Left ventricle myocardium inferior (tissue), 1 donor: ENCODE measurements at regions of chr7 and their contacts with region 1.

Region 1: DNA sequence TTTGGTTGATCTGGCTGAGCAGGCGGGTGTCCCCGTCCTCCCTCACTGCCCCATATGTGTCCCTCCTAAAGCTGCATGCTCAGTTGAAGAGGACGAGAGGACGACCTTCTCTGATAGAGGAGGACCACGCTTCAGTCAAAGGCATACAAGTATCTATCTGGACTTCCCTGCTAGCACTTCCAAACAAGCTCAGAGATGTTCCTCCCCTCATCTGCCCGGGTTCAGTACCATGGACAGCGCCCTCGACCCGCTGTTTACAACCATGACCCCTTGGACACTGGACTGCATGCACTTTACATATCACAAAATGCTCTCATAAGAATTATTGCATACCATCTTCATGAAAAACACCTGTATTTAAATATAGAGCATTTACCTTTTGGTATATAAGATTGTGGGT is 26.9 kb upstream of the TRIM56 start:
- DNase-seq: peak; percentile 52
- H3K4me3 ChIP-seq: no peak overlapping the region
- H3K27ac ChIP-seq: no peak overlapping the region
- H3K4me1 ChIP-seq: no peaks in the 10 kb centered on the region
- H3K27me3 ChIP-seq: peaks cover 96% of the 10 kb centered on the region
- CTCF ChIP-seq: no peak

Region 2: GRCh38 chr7:100894860-100895421 is 163.4 kb before region 1 on chr7:
- intact Hi-C with region 1: loop called (anchors 5 kb)
- DNase-seq: peak; percentile 29
- H3K4me3 ChIP-seq: peak overlapping the region; percentile 65
- H3K27ac ChIP-seq: peak overlapping the region; percentile 52
- H3K4me1 ChIP-seq: peaks cover 46% of the 10 kb centered on the region
- H3K27me3 ChIP-seq: peaks cover 77% of the 10 kb centered on the region
- CTCF ChIP-seq: peak; percentile 85

Region 3: GRCh38 chr7:100965723-100966541 is 92.4 kb before region 1 on chr7:
- intact Hi-C with region 1: loop called (anchors 10 kb)
- DNase-seq: peak; percentile 51
- H3K4me3 ChIP-seq: peak overlapping the region; percentile 50
- H3K27ac ChIP-seq: no peak overlapping the region
- H3K4me1 ChIP-seq: peaks cover 15% of the 10 kb centered on the region
- H3K27me3 ChIP-seq: peaks cover 94% of the 10 kb centered on the region
- CTCF ChIP-seq: peak; percentile 74

Region 4: DNA sequence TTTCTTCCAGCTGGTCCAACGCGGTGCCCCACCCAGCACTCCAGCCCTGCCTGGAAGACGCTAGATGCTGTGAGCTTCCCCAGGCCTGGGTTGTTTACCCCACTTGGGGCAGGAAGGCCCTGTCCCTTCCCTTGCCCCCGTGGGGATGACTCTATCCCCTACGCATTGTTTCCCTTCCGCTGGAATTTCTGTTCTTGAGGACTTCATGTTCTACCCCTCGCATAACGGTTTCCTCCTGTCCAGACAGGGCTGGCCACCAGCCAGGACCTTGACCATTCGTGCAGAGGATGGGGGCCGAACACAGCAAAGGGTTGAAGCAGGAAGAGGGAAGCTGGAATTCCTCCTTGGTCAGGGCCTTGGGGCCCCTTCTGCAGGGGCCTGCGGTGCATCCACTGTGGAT is 53.9 kb after region 1 on chr7:
- intact Hi-C with region 1: no loop called
- DNase-seq: peak; percentile 77
- H3K4me3 ChIP-seq: no peak overlapping the region
- H3K27ac ChIP-seq: peak overlapping the region; percentile 84
- H3K4me1 ChIP-seq: peaks cover 36% of the 10 kb centered on the region
- H3K27me3 ChIP-seq: no peaks in the 10 kb centered on the region
- CTCF ChIP-seq: no peak

Region 5: GRCh38 chr7:101169838-101170551 is 111.6 kb after region 1 on chr7:
- intact Hi-C with region 1: no loop called
- DNase-seq: peak; percentile 63
- H3K4me3 ChIP-seq: no peak overlapping the region
- H3K27ac ChIP-seq: no peak overlapping the region
- H3K4me1 ChIP-seq: peaks cover 46% of the 10 kb centered on the region
- H3K27me3 ChIP-seq: peaks cover 100% of the 10 kb centered on the region
- CTCF ChIP-seq: peak; percentile 87